ENCODE measurements at regions of chrX and their contacts with region 1.

Region 1: DNA sequence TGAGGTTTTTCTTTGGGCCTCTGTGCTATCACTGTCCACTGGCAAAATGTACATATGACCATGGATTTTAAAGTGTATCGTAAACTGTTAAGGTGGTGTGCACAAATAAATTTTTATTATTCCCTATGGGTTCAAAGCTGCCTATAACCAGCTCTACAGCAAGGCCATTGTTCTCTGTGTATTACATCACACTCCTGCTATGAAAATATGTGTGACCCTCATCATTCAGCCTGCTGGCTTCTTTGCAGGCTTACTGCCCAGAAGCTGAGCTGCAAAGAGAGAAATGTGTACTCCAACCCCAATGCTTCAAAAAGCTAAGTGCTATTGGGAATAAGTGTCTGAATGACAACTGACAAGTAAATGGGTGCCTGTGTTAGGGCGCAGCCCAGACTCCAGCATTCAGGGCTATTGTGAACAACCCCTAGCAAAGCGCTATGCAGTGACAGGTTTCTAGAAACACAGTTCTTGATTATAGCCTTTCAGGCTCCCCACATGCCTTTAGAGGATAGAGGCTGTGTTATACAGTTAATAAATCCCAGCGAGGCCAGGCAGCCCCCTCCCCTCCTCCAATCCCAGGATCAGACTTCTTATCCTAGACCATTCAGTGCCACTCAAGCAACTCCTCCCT is 220.4 kb upstream of the RADX start:
- DNase-seq: peak in 2 of 5 donors; percentile 22 to 33
- H3K4me3 ChIP-seq: no peak overlapping the region
- H3K27ac ChIP-seq: peak overlapping the region; percentile 47 to 67
- H3K4me1 ChIP-seq: no peaks in the 10 kb centered on the region
- H3K27me3 ChIP-seq: no peaks in the 10 kb centered on the region
- CTCF ChIP-seq: no peak
- EP300 ChIP-seq: no peak
- POLR2A ChIP-seq: no peak

Region 2: GRCh38 chrX:106170318-106170717 is 221.1 kb before region 1 on chrX:
- intact Hi-C with region 1: loop called in 2 of 4 experiments (anchors 5 kb)
- DNase-seq: peak in 1 of 5 donors; percentile 53
- H3K4me3 ChIP-seq: peak overlapping the region; percentile 14
- H3K27ac ChIP-seq: peak overlapping the region in 1 of 2 donors; percentile 43
- H3K4me1 ChIP-seq: no peaks in the 10 kb centered on the region
- H3K27me3 ChIP-seq: no peaks in the 10 kb centered on the region
- CTCF ChIP-seq: peak; percentile 39 to 68 (median 59)
- EP300 ChIP-seq: no peak
- POLR2A ChIP-seq: no peak

Measured in ovary (tissue), 10 donors.